ENCODE measurements at regions of chr3 and their contacts with region 1.

Region 1: GRCh38 chr3:172034786-172035685 is 4.3 kb upstream of the FNDC3B start:
- DNase-seq: peak; percentile 38
- ATAC-seq: no peak
- H3K4me3 Mint-ChIP-seq: no peak overlapping the region
- H3K27ac Mint-ChIP-seq: no peak overlapping the region
- H3K4me1 Mint-ChIP-seq: peaks cover 5% of the 10 kb centered on the region
- H3K27me3 Mint-ChIP-seq: peaks cover 5% of the 10 kb centered on the region

Region 2: GRCh38 chr3:172106989-172107388 is 72.0 kb after region 1 on chr3:
- CTCF ChIA-PET with region 1: interaction called, 11 read pairs
- POLR2A ChIA-PET with region 1: no interaction called
- DNase-seq: peak; percentile 87
- ATAC-seq: peak; percentile 66
- H3K4me3 Mint-ChIP-seq: peak overlapping the region; percentile 75
- H3K27ac Mint-ChIP-seq: peak overlapping the region; percentile 85
- H3K4me1 Mint-ChIP-seq: peaks cover 70% of the 10 kb centered on the region
- H3K27me3 Mint-ChIP-seq: peaks cover 2% of the 10 kb centered on the region

Measured in activated CD8-positive, alpha-beta T cell treated with anti-CD3 and anti-CD28 coated beads, Interleukin-2, amount 10 ng/mL, durations not matched to agents 7 days and 5 days (primary cell).